IMR-90 (cell line): ENCODE measurements at regions of chr14 and their contacts with region 1.

Region 1: GRCh38 chr14:30906752-30907658 is 32.6 kb downstream of the COCH start:
- DNase-seq: peak; percentile 15
- ATAC-seq: peak; percentile 67
- H3K4me3 ChIP-seq: no peak overlapping the region
- H3K27ac ChIP-seq: no peak overlapping the region
- H3K4me1 ChIP-seq: no peaks in the 10 kb centered on the region
- H3K27me3 ChIP-seq: no peaks in the 10 kb centered on the region
- CTCF ChIP-seq: peak; percentile 39
- POLR2A ChIP-seq: no peak
- RAD21 ChIP-seq: peak; percentile 35; the same call in 1 of the 2 replicates

Region 2: GRCh38 chr14:30656190-30656632 is 250.8 kb before region 1 on chr14:
- CTCF ChIA-PET with region 1: no interaction called
- POLR2A ChIA-PET with region 1: no interaction called
- dilution Hi-C with region 1: no loop called
- in situ Hi-C with region 1: loop called (anchors 10 kb)
- intact Hi-C with region 1: loop called (anchors 2 kb)
- DNase-seq: peak; percentile 26
- ATAC-seq: no peak
- H3K4me3 ChIP-seq: no peak overlapping the region
- H3K27ac ChIP-seq: no peak overlapping the region
- H3K4me1 ChIP-seq: peaks cover 2% of the 10 kb centered on the region; the same call in 1 of the 2 replicates
- H3K27me3 ChIP-seq: no peaks in the 10 kb centered on the region
- CTCF ChIP-seq: peak; percentile 57
- POLR2A ChIP-seq: no peak
- RAD21 ChIP-seq: 0 out of 2 replicates have a peak, but pooled peaks have one; percentile 21

Region 3: GRCh38 chr14:30861200-30861599 is 45.8 kb before region 1 on chr14:
- CTCF ChIA-PET with region 1: no interaction called
- POLR2A ChIA-PET with region 1: no interaction called
- dilution Hi-C with region 1: no loop called
- in situ Hi-C with region 1: no loop called
- intact Hi-C with region 1: loop called (anchors 2 kb)
- DNase-seq: no peak
- ATAC-seq: no peak
- H3K4me3 ChIP-seq: no peak overlapping the region
- H3K27ac ChIP-seq: no peak overlapping the region
- H3K4me1 ChIP-seq: no peaks in the 10 kb centered on the region
- H3K27me3 ChIP-seq: peaks cover 19% of the 10 kb centered on the region
- CTCF ChIP-seq: no peak
- POLR2A ChIP-seq: no peak
- RAD21 ChIP-seq: no peak